Tibial artery (tissue), 4 donors: ENCODE measurements at regions of chr5 and their contacts with region 1.

Region 1: GRCh38 chr5:62312036-62312435 is 6.0 kb downstream of the KIF2A start:
- DNase-seq: no peak
- H3K4me3 ChIP-seq: no peak overlapping the region
- H3K27ac ChIP-seq: peak overlapping the region in 1 of 2 donors; percentile 39
- H3K4me1 ChIP-seq: peaks cover 0 to 31% (median 17%) of the 10 kb centered on the region in 4 donors
- H3K27me3 ChIP-seq: no peaks in the 10 kb centered on the region
- CTCF ChIP-seq: no peak

Region 2: DNA sequence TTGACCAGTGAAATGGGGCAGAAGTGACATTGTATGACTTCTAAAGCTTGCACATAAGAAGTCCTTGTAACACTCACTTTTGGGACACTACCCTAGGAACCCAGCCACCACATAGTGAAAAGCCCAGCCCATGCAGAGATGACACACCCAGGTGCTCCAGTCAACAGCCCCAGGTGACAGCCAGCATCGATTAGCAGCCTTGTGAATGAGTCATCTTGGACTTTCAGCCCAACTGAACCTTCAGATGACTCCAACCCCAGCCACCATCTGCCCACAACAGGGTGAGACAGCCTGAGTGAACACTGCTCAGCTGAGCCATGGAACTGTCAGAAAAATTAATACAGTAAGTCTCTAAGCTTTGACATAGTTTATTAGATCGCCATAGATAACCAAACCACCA is 521.4 kb before region 1 on chr5:
- intact Hi-C with region 1: no loop called
- DNase-seq: no peak
- H3K4me3 ChIP-seq: no peak overlapping the region
- H3K27ac ChIP-seq: no peak overlapping the region
- H3K4me1 ChIP-seq: no peaks in the 10 kb centered on the region
- H3K27me3 ChIP-seq: no peaks in the 10 kb centered on the region
- CTCF ChIP-seq: no peak

Region 3: GRCh38 chr5:62347928-62348327 is 35.9 kb after region 1 on chr5:
- intact Hi-C with region 1: loop called (anchors 5 kb)
- DNase-seq: no peak
- H3K4me3 ChIP-seq: no peak overlapping the region
- H3K27ac ChIP-seq: no peak overlapping the region
- H3K4me1 ChIP-seq: no peaks in the 10 kb centered on the region
- H3K27me3 ChIP-seq: no peaks in the 10 kb centered on the region
- CTCF ChIP-seq: no peak